T-cell (primary cell): ENCODE measurements at regions of chr1 and their contacts with region 1.

Region 1: GRCh38 chr1:167526667-167527383 is 8.5 kb upstream of the CD247 start:
- DNase-seq: no peak
- ATAC-seq: no peak
- H3K4me3 ChIP-seq: no peak overlapping the region
- H3K4me3 Mint-ChIP-seq: no peak overlapping the region
- H3K27ac ChIP-seq: no peak overlapping the region
- H3K27ac Mint-ChIP-seq: no peak overlapping the region
- H3K4me1 ChIP-seq: no peaks in the 10 kb centered on the region
- H3K4me1 Mint-ChIP-seq: peaks cover 1 to 20% (median 2%) of the 10 kb centered on the region in 3 donors
- H3K27me3 ChIP-seq: peaks cover 0 to 5% of the 10 kb centered on the region in 2 experiments
- H3K27me3 Mint-ChIP-seq: no peaks in the 10 kb centered on the region

Region 2: GRCh38 chr1:166638137-166638536 is 888.7 kb before region 1 on chr1:
- CTCF ChIA-PET with region 1: no interaction called
- POLR2A ChIA-PET with region 1: no interaction called
- DNase-seq: no peak
- ATAC-seq: no peak
- H3K4me3 ChIP-seq: no peak overlapping the region
- H3K4me3 Mint-ChIP-seq: no peak overlapping the region
- H3K27ac ChIP-seq: no peak overlapping the region
- H3K27ac Mint-ChIP-seq: no peak overlapping the region
- H3K4me1 ChIP-seq: no peaks in the 10 kb centered on the region
- H3K4me1 Mint-ChIP-seq: no peaks in the 10 kb centered on the region
- H3K27me3 ChIP-seq: peaks cover 0 to 14% of the 10 kb centered on the region in 2 experiments
- H3K27me3 Mint-ChIP-seq: peaks cover 23 to 24% of the 10 kb centered on the region in 2 donors

Region 3: DNA sequence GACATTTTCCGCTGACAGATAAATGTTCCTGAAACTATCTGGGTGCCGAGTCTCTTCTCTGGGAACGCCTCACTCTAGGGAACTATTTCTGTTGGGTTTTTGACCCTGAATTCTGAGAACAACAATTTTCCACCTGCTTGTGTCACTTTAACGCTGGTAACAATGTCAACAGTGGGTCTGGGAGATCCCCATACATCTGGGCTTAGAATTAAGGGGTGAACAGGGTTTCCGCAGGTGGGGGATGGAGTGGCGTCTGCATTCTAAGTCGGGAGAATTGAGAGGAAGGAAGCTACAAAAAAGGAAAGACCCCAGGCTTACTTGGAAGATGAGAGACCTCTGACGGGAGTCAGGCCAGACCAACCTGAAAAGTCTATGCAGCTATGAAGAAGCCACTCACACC is 17.2 kb before region 1 on chr1:
- CTCF ChIA-PET with region 1: no interaction called
- POLR2A ChIA-PET with region 1: interaction called in 1 of 2 experiments, 20 read pairs
- DNase-seq: peak in 18 of 35 experiments; percentile 24 to 70 (median 44)
- ATAC-seq: peak in 2 of 4 experiments; percentile 21 to 69
- H3K4me3 ChIP-seq: peak overlapping the region in 1 of 2 donors; percentile 14
- H3K4me3 Mint-ChIP-seq: peak overlapping the region; percentile 74 to 99 (median 98)
- H3K27ac ChIP-seq: peak overlapping the region; percentile 53
- H3K27ac Mint-ChIP-seq: peak overlapping the region; percentile 87 to 88
- H3K4me1 ChIP-seq: peaks cover 70 to 82% of the 10 kb centered on the region in 2 experiments
- H3K4me1 Mint-ChIP-seq: peaks cover 88 to 95% (median 91%) of the 10 kb centered on the region in 3 donors
- H3K27me3 ChIP-seq: no peaks in the 10 kb centered on the region
- H3K27me3 Mint-ChIP-seq: no peaks in the 10 kb centered on the region

Region 4: DNA sequence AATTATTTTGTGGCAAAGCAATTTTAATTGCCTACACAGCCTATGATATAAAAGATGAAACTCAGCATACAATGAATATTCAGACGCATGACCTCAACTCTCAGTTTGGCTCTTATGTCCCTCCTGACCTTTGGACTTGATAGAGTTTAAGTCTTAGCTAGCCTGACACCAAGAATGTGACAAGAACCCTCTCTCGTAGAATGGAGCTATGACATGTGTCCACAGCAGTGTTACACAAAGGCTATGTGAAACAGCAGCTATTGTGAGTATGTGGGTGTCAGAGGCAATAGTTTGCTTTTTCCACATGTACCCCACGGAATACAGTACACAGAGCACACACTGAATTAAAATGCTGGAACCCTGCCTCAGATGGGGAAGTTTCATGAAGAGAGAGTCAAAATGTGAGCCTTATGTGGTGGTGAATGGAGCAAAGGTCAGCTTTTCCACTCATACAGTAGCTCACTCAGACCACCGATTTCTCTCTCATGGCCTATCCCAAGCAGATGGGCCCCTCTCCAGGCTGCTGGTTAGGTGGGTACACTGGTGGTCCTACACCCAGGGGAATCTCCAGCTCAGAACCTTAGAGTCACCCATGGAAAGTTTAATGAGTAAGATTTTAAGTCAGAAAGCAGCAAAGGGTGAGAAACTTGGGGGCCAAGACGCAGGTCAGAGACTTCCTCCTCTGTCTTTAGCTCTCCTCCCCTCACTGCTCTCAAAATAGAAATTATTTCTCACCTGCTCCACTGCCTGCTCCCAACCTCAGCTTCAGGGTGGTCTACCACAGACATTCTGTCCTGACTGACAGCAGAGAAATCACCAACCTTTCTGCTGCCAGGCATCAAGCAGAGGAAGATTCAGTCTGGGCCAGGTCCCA is 1027.1 kb after region 1 on chr1:
- CTCF ChIA-PET with region 1: no interaction called
- POLR2A ChIA-PET with region 1: no interaction called
- DNase-seq: no peak
- ATAC-seq: no peak
- H3K4me3 ChIP-seq: no peak overlapping the region
- H3K4me3 Mint-ChIP-seq: no peak overlapping the region
- H3K27ac ChIP-seq: peak overlapping the region; percentile 10
- H3K27ac Mint-ChIP-seq: peak overlapping the region; percentile 23 to 47
- H3K4me1 ChIP-seq: peaks cover 2 to 20% of the 10 kb centered on the region in 2 experiments
- H3K4me1 Mint-ChIP-seq: peaks cover 39 to 43% (median 40%) of the 10 kb centered on the region in 3 donors
- H3K27me3 ChIP-seq: no peaks in the 10 kb centered on the region
- H3K27me3 Mint-ChIP-seq: no peaks in the 10 kb centered on the region